Posterior vena cava (tissue), 2 donors: ENCODE measurements at regions of chr4 and their contacts with region 1.

Region 1: GRCh38 chr4:176277162-176277904 is 8.3 kb upstream of the ASB5 start:
- DNase-seq: peak; percentile 83

Region 2: DNA sequence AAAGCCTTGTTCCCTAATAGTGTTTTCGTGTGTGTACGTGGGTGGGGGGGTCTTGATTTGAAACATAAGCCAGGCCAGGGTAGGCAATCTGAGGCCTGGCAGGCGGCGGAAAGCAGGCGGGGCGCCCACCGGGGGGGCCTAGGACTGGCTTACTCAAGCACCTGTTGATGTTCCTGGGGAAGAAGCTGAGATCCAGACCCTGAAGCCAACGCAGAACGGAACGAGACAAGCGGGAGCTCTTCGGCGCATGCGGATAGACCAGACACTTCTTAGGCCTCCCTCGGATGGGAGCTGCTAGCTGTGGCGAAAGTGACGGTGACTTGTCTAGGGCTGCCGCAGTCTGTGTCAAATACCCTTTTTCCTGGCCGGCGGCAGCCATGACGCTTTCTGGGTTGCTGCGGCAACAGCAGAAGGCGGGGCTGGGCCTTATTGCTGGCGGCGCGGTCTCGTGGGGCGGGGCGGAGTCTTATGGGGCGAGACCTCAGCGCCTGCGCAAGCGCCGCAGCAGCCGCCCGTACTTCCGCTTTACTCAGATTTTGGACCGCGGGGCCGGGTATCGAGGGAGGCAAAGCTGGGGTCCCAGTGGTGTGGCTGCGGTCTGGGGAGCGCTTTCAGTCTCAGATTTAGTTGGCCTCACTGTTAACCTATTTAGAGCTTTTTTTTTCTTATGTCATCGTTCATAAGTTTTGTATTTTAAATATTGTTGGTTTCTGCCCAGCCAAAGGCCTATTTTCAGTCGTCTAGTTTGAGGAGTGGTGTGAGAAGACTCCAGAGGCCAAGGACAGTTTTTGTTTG is 82.0 kb before region 1 on chr4 and contains the start of gene SPATA4:
- intact Hi-C with region 1: loop called in 1 of 2 experiments (anchors 10 kb)
- DNase-seq: peak; percentile 98
- total RNA-seq, gene SPATA4: 0.76 TPM in 1 of 2 donors, not detected in the other

Region 3: DNA sequence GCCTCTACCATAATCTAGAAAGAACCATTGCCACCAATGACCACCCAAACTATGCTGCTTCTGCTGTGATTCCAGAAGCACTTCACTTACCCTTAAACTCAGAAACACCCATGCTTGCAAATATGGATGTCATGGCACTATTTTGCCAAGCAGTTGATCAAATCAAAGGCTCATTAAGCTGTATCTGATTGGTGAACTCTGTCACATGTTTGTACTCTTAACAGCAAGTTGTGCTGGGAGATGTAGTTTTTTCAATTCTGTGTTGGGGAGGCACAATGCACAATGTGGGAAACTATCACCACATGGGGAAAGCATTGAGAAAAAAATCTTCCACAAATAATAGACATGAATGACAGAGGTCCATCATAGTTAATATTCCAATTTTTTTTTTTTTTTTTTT is 23.2 kb after region 1 on chr4:
- intact Hi-C with region 1: loop called in 1 of 2 experiments (anchors 2 kb)
- DNase-seq: no peak

Region 4: GRCh38 chr4:176587920-176588319 is 310.6 kb after region 1 on chr4:
- intact Hi-C with region 1: no loop called
- DNase-seq: no peak